Right lobe of liver (tissue), 6 donors: ENCODE measurements at regions of chr2 and their contacts with region 1.

Region 1: DNA sequence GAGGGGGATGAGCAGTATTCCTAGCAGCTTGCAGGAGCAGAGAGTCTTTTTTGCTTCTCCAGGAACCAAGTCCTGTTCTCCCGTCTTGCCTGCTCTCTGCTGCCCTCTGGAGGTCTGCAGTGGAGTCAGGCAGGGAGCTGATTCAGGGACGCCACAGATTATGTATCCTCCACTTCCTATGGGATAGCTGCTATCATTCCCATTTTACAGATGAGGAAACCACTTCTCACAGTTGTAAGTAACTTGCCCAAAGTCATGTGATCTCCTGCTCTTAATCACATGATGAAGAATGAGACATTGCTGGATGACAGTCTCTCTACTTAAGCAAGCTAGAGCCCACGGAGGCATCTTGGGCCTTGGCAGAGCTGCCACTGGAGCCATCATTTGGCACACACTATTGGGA is 8.3 kb downstream of the SLC4A5 start:
- DNase-seq: peak; percentile 71 to 79 (median 76)
- ATAC-seq: peak; percentile 93 to 96 (median 94)
- H3K4me3 ChIP-seq: no peak overlapping the region
- H3K27ac ChIP-seq: no peak overlapping the region
- H3K4me1 ChIP-seq: no peaks in the 10 kb centered on the region
- H3K27me3 ChIP-seq: no peaks in the 10 kb centered on the region
- CTCF ChIP-seq: peak; percentile 67 to 97 (median 96)
- POLR2A ChIP-seq: no peak

Region 2: DNA sequence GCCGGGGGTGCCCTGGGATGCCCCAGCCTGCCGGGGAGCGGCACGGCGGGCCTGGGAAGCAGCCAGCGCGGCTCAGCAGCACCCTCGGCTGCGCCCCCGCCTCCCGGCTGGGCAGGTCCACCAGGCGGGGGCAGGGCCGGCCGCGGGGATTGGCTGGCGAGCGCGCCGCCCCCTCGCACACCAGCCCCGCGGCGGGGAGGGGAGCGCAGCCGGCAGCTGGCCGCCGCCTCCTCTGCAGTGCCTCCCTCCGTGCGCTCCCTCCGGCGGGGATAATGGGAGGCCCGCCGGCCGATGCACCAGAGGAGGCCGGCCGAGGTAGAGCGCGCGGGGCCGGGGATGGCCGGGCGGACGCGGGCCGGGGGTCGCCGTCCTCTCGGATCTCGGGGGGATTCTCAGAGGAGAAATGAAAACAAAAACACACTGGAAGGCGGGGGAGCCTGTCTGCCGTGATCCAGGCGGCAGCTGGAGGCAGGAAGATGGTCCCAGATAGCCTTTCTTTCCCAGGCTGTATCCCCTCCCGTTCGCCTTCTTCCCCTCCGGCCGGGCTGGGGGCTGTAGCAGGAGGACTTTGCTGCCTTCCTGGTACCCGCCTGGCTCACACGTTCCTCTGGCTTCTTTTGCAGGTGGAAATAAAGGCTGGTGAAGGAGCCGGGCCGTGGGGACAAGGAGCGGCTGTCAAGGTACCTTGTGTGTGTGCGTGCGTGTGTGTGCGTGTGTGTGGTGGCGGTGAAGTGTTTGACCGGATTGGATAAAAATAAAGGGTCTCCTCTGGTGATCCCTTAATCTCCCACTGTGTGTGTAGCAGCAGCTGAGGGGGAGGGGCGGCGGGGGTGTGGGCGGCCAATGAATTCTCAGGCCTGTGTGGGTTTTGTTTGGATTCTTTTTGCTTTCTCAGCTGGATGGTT is 332.2 kb before region 1 on chr2:
- intact Hi-C with region 1: no loop called
- DNase-seq: peak; percentile 87 to 91 (median 88)
- ATAC-seq: peak; percentile 98 to 100 (median 98)
- H3K4me3 ChIP-seq: peak overlapping the region; percentile 41 to 60 (median 55)
- H3K27ac ChIP-seq: no peak overlapping the region
- H3K4me1 ChIP-seq: peaks cover 0 to 7% (median 0%) of the 10 kb centered on the region in 4 donors
- H3K27me3 ChIP-seq: no peaks in the 10 kb centered on the region
- CTCF ChIP-seq: no peak
- POLR2A ChIP-seq: peak; percentile 58

Region 3: GRCh38 chr2:74379851-74380789 is 45.2 kb after region 1 on chr2 and contains the start of gene DCTN1:
- intact Hi-C with region 1: loop called in 1 of 2 experiments (anchors 10 kb)
- DNase-seq: no peak
- ATAC-seq: peak in 2 of 4 donors; percentile 7 to 29
- H3K4me3 ChIP-seq: no peak within 1 kb of the TSS
- H3K27ac ChIP-seq: no peak within 1 kb of the TSS
- H3K4me1 ChIP-seq: peaks cover 0 to 20% (median 7%) of the 10 kb centered on the region in 4 donors
- H3K27me3 ChIP-seq: no peaks in the 10 kb centered on the region
- CTCF ChIP-seq: no peak
- POLR2A ChIP-seq: no peak
- total RNA-seq, gene DCTN1: 33.7 to 47.9 (median 37.3) TPM